Heart left ventricle (tissue), 16 donors: ENCODE measurements at regions of chr18 and their contacts with region 1.

Region 1: GRCh38 chr18:13800505-13801259 is 23.3 kb upstream of the MC5R start:
- DNase-seq: peak; percentile 65 to 85 (median 76)
- ATAC-seq: peak; percentile 89 to 98 (median 94)
- H3K4me3 ChIP-seq: peak overlapping the region in 10 of 12 donors; percentile 6 to 49 (median 33)
- H3K27ac ChIP-seq: no peak overlapping the region
- H3K4me1 ChIP-seq: peaks cover 0 to 15% (median 4%) of the 10 kb centered on the region in 12 donors
- H3K27me3 ChIP-seq: peaks cover 0 to 30% (median 0%) of the 10 kb centered on the region in 9 donors
- CTCF ChIP-seq: peak; percentile 26 to 66 (median 50)
- POLR2A ChIP-seq: no peak

Region 2: DNA sequence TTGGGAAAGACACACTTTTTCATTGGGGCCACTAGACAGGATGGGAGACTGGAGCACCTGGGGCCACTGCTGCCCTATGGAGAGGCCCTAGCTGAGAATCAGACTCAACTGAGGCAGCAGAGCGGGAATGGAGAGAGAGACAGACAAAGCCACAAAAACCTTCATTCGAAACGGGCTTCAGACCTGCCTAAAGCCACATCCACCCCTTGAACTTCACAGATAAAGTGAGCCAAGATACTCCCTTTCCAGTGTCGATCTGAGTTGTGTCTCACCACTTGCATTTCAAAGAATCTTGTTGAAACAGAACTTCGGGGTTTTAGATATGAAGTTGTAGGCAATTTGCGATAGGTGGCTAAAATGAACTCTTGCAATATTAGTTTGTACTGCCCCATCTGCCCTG is 593.4 kb before region 1 on chr18:
- intact Hi-C with region 1: loop called in 2 of 10 experiments (anchors 10 kb)
- DNase-seq: no peak
- ATAC-seq: no peak
- H3K4me3 ChIP-seq: no peak overlapping the region
- H3K27ac ChIP-seq: no peak overlapping the region
- H3K4me1 ChIP-seq: no peaks in the 10 kb centered on the region
- H3K27me3 ChIP-seq: no peaks in the 10 kb centered on the region
- CTCF ChIP-seq: no peak
- POLR2A ChIP-seq: no peak

Region 3: GRCh38 chr18:13558124-13558523 is 242.6 kb before region 1 on chr18:
- intact Hi-C with region 1: loop called in 1 of 10 experiments (anchors 5 kb)
- DNase-seq: peak in 4 of 5 donors; percentile 45 to 72 (median 60)
- ATAC-seq: peak; percentile 73 to 84 (median 76)
- H3K4me3 ChIP-seq: no peak overlapping the region
- H3K27ac ChIP-seq: peak overlapping the region in 5 of 12 donors; percentile 23 to 59 (median 32)
- H3K4me1 ChIP-seq: peaks cover 3 to 68% (median 29%) of the 10 kb centered on the region in 12 donors
- H3K27me3 ChIP-seq: no peaks in the 10 kb centered on the region
- CTCF ChIP-seq: peak; percentile 48 to 75 (median 64)
- POLR2A ChIP-seq: no peak

Region 4: DNA sequence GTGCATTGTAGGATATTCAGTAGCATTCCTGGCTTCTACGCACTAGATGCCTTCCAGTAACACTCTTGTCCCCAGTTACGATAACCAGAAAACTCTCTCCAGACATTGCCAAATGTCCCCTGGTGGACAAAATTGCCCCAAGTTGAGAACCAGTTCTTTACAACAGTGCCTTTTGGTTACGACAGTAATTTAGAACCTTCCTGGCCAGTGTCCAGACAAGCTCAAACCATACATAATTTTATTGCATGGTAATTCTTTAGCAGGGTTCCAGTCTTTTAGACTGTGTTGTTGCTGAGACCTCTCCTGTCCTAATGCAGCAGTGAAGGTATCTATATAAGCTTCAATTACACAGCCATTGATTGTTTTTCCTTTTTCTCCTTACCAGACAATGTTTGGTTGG is 54.0 kb before region 1 on chr18:
- intact Hi-C with region 1: loop called in 1 of 10 experiments (anchors 10 kb)
- DNase-seq: no peak
- ATAC-seq: no peak
- H3K4me3 ChIP-seq: no peak overlapping the region
- H3K27ac ChIP-seq: no peak overlapping the region
- H3K4me1 ChIP-seq: no peaks in the 10 kb centered on the region
- H3K27me3 ChIP-seq: no peaks in the 10 kb centered on the region
- CTCF ChIP-seq: no peak
- POLR2A ChIP-seq: no peak